Activated naive CD4-positive, alpha-beta T cell treated with anti-CD3 and anti-CD28 coated beads for 36 hours (primary cell): ENCODE measurements at regions of chr3 and their contacts with region 1.

Region 1: GRCh38 chr3:60081381-60082095 is 1031.7 kb upstream of the CFAP20DC start:
- DNase-seq: no peak
- H3K4me3 Mint-ChIP-seq: peak overlapping the region; percentile 47
- H3K27ac Mint-ChIP-seq: peak overlapping the region; percentile 98
- H3K4me1 Mint-ChIP-seq: peaks cover 67% of the 10 kb centered on the region
- H3K27me3 Mint-ChIP-seq: no peaks in the 10 kb centered on the region

Region 2: GRCh38 chr3:59935025-59935424 is 146.5 kb before region 1 on chr3:
- CTCF ChIA-PET with region 1: interaction called, 3 read pairs
- intact Hi-C with region 1: loop called (anchors 1 kb)
- DNase-seq: peak; percentile 53
- H3K4me3 Mint-ChIP-seq: peak overlapping the region; percentile 50
- H3K27ac Mint-ChIP-seq: peak overlapping the region; percentile 78
- H3K4me1 Mint-ChIP-seq: peaks cover 89% of the 10 kb centered on the region
- H3K27me3 Mint-ChIP-seq: no peaks in the 10 kb centered on the region

Region 3: DNA sequence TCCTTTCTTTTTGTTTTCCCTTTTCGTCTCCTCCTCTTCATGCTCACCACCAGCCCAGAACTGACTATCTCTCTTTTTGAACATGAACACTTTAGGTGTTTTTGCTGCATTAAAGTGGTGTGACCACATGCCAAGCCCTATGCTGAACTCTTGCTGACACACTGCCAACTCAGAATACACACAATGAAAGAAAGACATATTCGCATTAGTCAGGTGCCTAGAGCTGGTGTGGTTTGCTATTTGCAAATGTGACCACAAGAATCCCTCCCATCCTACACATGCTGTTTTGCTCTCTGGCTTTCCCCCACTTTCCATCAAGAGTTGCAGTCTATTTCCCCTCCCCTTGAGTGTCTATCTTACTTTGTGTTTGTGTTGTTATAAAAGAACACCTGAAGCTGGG is 63.9 kb before region 1 on chr3:
- CTCF ChIA-PET with region 1: interaction called, 5 read pairs
- intact Hi-C with region 1: loop called (anchors 1 kb)
- DNase-seq: peak; percentile 86
- H3K4me3 Mint-ChIP-seq: peak overlapping the region; percentile 74
- H3K27ac Mint-ChIP-seq: peak overlapping the region; percentile 100
- H3K4me1 Mint-ChIP-seq: peaks cover 82% of the 10 kb centered on the region
- H3K27me3 Mint-ChIP-seq: no peaks in the 10 kb centered on the region

Region 4: DNA sequence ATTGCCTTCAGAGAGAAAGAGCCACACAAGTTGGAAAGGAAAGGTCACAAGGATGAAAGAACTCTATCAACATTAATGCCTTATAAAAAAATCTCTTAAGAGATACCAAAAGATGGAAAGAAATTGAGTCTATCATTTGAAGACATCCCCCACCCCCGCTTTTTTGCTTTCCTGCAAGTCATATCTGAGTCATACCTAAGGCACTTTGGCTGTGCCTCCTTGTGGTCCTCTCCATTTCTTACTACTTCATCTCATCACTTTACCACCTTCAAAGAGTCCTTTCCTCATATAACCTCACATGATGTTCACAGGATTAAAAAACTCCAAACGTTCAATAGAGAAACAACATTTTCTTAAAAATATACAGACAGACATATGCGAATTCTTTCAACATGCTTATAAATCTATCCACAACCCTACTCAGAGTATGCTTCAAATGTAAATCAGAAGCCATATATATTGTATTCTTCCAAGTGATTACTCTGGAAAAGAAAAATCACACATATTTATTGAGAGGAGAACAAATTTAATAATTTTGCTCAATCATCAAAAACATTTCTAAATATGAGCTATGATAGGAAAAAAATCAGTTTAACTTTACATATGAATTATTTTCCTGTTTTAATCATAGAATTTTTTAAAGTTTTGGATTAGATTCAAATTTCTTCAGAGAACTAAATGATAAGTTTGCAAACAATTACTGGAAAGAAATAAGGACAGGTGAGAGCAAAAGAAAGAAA is 27.8 kb before region 1 on chr3:
- CTCF ChIA-PET with region 1: interaction called, 7 read pairs
- intact Hi-C with region 1: loop called (anchors 1 kb)
- DNase-seq: peak; percentile 80
- H3K4me3 Mint-ChIP-seq: peak overlapping the region; percentile 32
- H3K27ac Mint-ChIP-seq: peak overlapping the region; percentile 92
- H3K4me1 Mint-ChIP-seq: peaks cover 86% of the 10 kb centered on the region
- H3K27me3 Mint-ChIP-seq: no peaks in the 10 kb centered on the region

Region 5: DNA sequence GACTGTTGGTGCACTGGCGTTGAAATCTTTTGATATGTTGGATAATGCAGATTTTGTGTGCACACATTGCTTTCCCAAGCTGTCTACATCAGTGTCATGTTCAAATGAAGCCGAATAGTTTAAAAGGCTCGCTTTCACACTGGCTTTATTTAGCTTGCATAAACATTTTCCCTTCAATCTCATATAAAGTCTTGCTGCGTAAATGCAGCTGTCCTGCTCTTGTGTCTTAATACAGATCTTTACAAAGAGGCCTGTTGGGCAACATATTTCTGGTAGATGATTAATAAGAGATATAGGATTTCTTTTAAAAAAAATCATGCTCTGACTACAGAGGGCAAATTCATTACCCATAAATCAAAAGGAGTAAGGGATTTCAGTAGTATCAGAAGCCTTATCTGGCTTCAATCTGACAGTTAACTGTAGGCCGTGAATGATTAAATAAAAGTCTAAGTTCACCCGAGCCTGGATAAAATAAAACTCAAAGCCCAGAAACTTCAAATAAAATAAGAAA is 232.5 kb after region 1 on chr3:
- CTCF ChIA-PET with region 1: no interaction called
- intact Hi-C with region 1: loop called (anchors 5 kb)
- DNase-seq: no peak
- H3K4me3 Mint-ChIP-seq: no peak overlapping the region
- H3K27ac Mint-ChIP-seq: no peak overlapping the region
- H3K4me1 Mint-ChIP-seq: peaks cover 15% of the 10 kb centered on the region
- H3K27me3 Mint-ChIP-seq: no peaks in the 10 kb centered on the region

Region 6: GRCh38 chr3:60339304-60339703 is 257.8 kb after region 1 on chr3:
- CTCF ChIA-PET with region 1: no interaction called
- intact Hi-C with region 1: no loop called
- DNase-seq: no peak
- H3K4me3 Mint-ChIP-seq: no peak overlapping the region
- H3K27ac Mint-ChIP-seq: no peak overlapping the region
- H3K4me1 Mint-ChIP-seq: no peaks in the 10 kb centered on the region
- H3K27me3 Mint-ChIP-seq: no peaks in the 10 kb centered on the region

Region 7: GRCh38 chr3:61251174-61251972 is 1169.8 kb after region 1 on chr3 and contains the start of gene FHIT:
- CTCF ChIA-PET with region 1: no interaction called
- intact Hi-C with region 1: loop called (anchors 5 kb)
- DNase-seq: peak; percentile 96
- H3K4me3 Mint-ChIP-seq: peak within 1 kb of the TSS; percentile 91
- H3K27ac Mint-ChIP-seq: peak within 1 kb of the TSS; percentile 87
- H3K4me1 Mint-ChIP-seq: peaks cover 11% of the 10 kb centered on the region
- H3K27me3 Mint-ChIP-seq: peaks cover under 1% of the 10 kb centered on the region
- total RNA-seq, gene FHIT: 20.2 to 22.7 TPM